ENCODE measurements at regions of chr3 and their contacts with region 1.

Region 1: GRCh38 chr3:56915966-56916586 is 114.3 kb upstream of the ARHGEF3 start:
- DNase-seq: peak; percentile 87
- ATAC-seq: peak; percentile 86
- H3K4me3 Mint-ChIP-seq: peak overlapping the region; percentile 73
- H3K27ac Mint-ChIP-seq: peak overlapping the region; percentile 79
- H3K4me1 Mint-ChIP-seq: peaks cover 68% of the 10 kb centered on the region
- H3K27me3 Mint-ChIP-seq: no peaks in the 10 kb centered on the region

Region 2: DNA sequence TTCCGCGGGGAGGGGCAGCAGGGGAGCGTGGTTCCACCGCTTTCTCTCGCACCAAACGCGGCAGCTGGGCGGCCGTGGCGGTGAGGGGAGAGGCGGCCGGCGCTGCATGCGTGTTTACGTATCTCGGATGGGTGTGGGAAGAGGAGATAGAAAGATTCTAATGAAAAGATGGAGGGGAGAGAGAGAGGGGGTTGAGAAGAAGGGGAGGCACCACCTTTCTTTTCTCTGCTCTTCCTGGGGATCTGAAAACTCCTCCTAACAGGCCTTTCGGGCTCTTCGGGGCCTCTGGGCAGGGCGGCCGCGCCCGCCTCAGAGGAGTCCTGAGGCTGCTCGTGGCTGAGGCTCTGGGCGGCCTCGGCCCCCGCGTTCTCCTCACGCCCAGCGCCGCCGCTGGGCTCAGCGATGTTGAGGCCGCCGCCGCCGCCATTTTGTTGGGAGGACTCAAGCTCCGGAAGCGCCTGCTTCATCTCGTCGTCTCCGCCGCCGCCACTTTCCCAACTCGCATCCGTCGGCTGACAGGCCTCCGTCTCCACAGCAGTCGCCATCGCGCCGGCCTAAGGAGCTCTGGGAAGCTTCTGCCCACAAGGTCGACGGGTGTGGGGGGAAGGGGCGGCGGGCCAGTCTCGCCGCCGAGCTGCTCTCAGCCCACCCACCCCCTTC is 233.5 kb before region 1 on chr3:
- CTCF ChIA-PET with region 1: no interaction called
- POLR2A ChIA-PET with region 1: no interaction called
- intact Hi-C with region 1: loop called in 1 of 2 experiments (anchors 1 kb)
- DNase-seq: peak; percentile 88
- ATAC-seq: peak; percentile 78
- H3K4me3 Mint-ChIP-seq: peak overlapping the region; percentile 92
- H3K27ac Mint-ChIP-seq: peak overlapping the region; percentile 94
- H3K4me1 Mint-ChIP-seq: peaks cover 38% of the 10 kb centered on the region
- H3K27me3 Mint-ChIP-seq: no peaks in the 10 kb centered on the region

Region 3: GRCh38 chr3:56783644-56784447 is 132.2 kb before region 1 on chr3:
- CTCF ChIA-PET with region 1: interaction called, 3 read pairs
- POLR2A ChIA-PET with region 1: interaction called, 3 read pairs
- intact Hi-C with region 1: loop called in 1 of 2 experiments (anchors 5 kb)
- DNase-seq: peak; percentile 81
- ATAC-seq: peak; percentile 77
- H3K4me3 Mint-ChIP-seq: peak overlapping the region; percentile 65
- H3K27ac Mint-ChIP-seq: peak overlapping the region; percentile 97
- H3K4me1 Mint-ChIP-seq: peaks cover 98% of the 10 kb centered on the region
- H3K27me3 Mint-ChIP-seq: no peaks in the 10 kb centered on the region

Region 4: DNA sequence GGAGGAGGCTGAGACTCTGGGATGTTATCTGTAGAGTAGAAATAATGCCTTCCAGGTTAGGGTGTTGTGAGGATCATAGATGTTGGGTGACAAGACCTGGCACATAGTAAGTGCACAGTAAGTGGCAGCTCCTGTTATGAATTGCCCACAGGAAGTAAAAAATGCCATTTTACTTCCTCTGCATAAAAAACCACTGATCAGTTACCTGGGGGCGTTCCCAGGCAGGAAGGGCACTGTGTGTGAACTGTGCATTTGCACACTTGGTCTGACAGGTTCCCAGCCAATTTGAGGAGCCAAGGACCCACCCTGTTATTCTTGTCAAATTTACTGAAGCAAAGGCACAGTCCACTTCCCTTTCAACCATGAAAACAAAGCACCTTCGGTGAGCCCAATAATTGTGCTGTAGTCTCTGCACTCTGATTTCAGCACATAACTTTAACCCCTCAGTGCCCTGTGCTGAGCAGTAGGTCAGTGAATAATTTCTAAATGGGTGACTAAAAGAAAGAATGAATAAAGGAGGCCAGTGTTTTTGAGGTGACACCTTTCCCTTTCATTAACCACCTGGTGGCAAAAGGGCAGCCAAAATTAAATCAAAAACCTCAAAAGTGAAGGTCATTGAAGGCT is 28.6 kb before region 1 on chr3:
- CTCF ChIA-PET with region 1: interaction called, 7 read pairs
- POLR2A ChIA-PET with region 1: interaction called, 3 read pairs
- intact Hi-C with region 1: loop called (anchors 2 kb)
- DNase-seq: peak; percentile 63
- ATAC-seq: peak; percentile 77
- H3K4me3 Mint-ChIP-seq: peak overlapping the region; percentile 22
- H3K27ac Mint-ChIP-seq: peak overlapping the region; percentile 74
- H3K4me1 Mint-ChIP-seq: peaks cover 82% of the 10 kb centered on the region
- H3K27me3 Mint-ChIP-seq: no peaks in the 10 kb centered on the region

Region 5: DNA sequence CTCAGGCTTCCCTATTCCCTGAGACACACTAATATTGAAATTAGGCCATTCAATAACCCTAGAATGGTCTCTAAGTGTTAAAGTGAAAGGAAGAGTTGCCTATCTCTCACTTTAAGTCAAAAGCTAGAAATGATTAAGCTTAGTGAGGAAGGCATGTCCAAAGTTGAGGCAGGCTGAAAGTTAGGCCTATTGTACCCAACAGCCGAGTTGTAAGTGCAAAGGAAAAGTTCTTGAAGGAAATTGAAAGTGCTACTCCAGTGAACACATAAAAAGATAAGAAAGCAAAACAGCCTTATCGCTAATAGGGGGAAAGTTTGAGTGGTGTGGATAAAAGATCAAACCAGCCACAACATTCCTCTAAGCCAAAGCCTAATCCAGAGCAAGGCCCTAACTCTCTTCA is 26.4 kb after region 1 on chr3:
- CTCF ChIA-PET with region 1: interaction called, 9 read pairs
- POLR2A ChIA-PET with region 1: no interaction called
- intact Hi-C with region 1: loop called (anchors 1 to 2 kb)
- DNase-seq: no peak
- ATAC-seq: peak; percentile 88
- H3K4me3 Mint-ChIP-seq: no peak overlapping the region
- H3K27ac Mint-ChIP-seq: peak overlapping the region; percentile 52
- H3K4me1 Mint-ChIP-seq: peaks cover 20% of the 10 kb centered on the region
- H3K27me3 Mint-ChIP-seq: no peaks in the 10 kb centered on the region

Region 6: GRCh38 chr3:57227204-57227929 is 311.3 kb after region 1 on chr3 and contains the start of gene APPL1:
- CTCF ChIA-PET with region 1: interaction called, 4 read pairs
- POLR2A ChIA-PET with region 1: no interaction called
- intact Hi-C with region 1: loop called in 1 of 2 experiments (anchors 10 kb)
- DNase-seq: peak; percentile 94
- ATAC-seq: peak; percentile 92
- H3K4me3 Mint-ChIP-seq: peak within 1 kb of the TSS; percentile 88
- H3K27ac Mint-ChIP-seq: peak within 1 kb of the TSS; percentile 78
- H3K4me1 Mint-ChIP-seq: peaks cover 29% of the 10 kb centered on the region
- H3K27me3 Mint-ChIP-seq: no peaks in the 10 kb centered on the region
- total RNA-seq, gene APPL1: 38.4 to 39.4 TPM